SK-N-SH (cell line): ENCODE measurements at regions of chr9 and their contacts with region 1.

Region 1: GRCh38 chr9:34929506-34930102 is 28.5 kb upstream of the PHF24 start:
- DNase-seq: peak; percentile 59
- H3K4me3 ChIP-seq: no peak overlapping the region
- H3K27ac ChIP-seq: no peak overlapping the region
- H3K4me1 ChIP-seq: peaks cover 0 to 6% of the 10 kb centered on the region in 2 experiments; a peak in 1 of 4 replicates
- H3K27me3 ChIP-seq: peaks cover 9% of the 10 kb centered on the region
- CTCF ChIP-seq: peak; percentile 63
- EP300 ChIP-seq: no peak
- RAD21 ChIP-seq: peak; percentile 29; the same call in 1 of the 2 replicates

Region 2: GRCh38 chr9:33737811-33738606 is 1191.6 kb before region 1 on chr9:
- CTCF ChIA-PET with region 1: no interaction called
- POLR2A ChIA-PET with region 1: no interaction called
- DNase-seq: peak; percentile 59
- H3K4me3 ChIP-seq: no peak overlapping the region
- H3K27ac ChIP-seq: no peak overlapping the region
- H3K4me1 ChIP-seq: peaks cover 0 to 7% of the 10 kb centered on the region in 2 experiments; a peak in 1 of 4 replicates
- H3K27me3 ChIP-seq: no peaks in the 10 kb centered on the region
- CTCF ChIP-seq: peak; percentile 63
- EP300 ChIP-seq: no peak
- RAD21 ChIP-seq: peak; percentile 82

Region 3: DNA sequence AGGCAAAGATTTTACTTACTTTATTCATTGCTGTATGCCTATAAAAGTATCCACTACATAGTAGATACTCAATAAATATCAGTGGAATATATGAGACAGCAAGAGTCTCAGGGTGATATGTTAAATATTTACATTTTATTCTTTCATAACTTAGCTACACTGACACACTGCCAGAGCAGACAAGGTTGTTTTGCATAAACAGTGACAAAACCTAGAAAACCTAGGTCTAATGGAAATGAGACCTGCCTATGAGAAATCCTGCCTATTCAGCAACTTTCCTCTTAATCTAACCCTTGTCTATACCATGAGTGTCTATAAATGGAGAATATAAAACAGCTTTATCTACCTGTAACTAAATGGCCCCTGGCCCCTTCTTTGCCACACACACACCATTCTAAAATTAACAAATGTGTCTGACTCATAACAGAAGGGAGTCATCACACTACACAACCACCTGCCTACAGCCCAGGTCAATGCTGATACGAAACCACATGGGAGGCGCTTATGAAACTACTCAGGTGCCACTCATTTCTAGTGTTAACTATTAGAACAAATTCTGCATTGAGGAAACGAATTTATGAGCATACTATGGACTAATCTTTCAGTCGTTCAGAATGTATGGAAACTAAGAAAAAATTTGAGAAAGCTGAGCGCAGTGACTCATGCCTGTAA is 941.2 kb before region 1 on chr9:
- CTCF ChIA-PET with region 1: no interaction called
- POLR2A ChIA-PET with region 1: no interaction called
- DNase-seq: no peak
- H3K4me3 ChIP-seq: no peak overlapping the region
- H3K27ac ChIP-seq: no peak overlapping the region
- H3K4me1 ChIP-seq: no peaks in the 10 kb centered on the region
- H3K27me3 ChIP-seq: no peaks in the 10 kb centered on the region
- CTCF ChIP-seq: no peak
- EP300 ChIP-seq: no peak
- RAD21 ChIP-seq: no peak

Region 4: DNA sequence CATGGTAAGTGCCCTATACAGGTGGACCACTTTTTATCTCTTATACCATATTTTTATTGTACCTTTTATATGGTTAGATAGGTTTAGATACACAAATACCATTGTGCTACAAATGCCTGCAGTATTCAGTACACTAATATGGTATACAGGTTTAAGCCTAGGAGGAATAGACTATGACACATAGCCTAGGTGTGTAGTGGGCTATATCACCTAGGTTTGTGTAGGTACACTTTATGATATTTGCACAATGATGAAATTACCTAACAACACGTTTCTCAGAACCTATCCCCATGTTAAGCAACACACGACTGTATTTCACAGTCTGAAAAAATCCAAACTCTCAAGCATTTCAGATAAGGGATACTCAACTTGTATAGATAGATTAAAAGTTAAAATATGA is 18.8 kb after region 1 on chr9:
- CTCF ChIA-PET with region 1: interaction called, 14 read pairs
- POLR2A ChIA-PET with region 1: interaction called, 3 read pairs
- DNase-seq: no peak
- H3K4me3 ChIP-seq: no peak overlapping the region
- H3K27ac ChIP-seq: no peak overlapping the region
- H3K4me1 ChIP-seq: no peaks in the 10 kb centered on the region
- H3K27me3 ChIP-seq: no peaks in the 10 kb centered on the region
- CTCF ChIP-seq: no peak
- EP300 ChIP-seq: no peak
- RAD21 ChIP-seq: no peak